IMR-90 (cell line): ENCODE measurements at regions of chr7 and their contacts with region 1.

Region 1: GRCh38 chr7:143490717-143491306 is 13.1 kb downstream of the TAS2R41 start:
- DNase-seq: no peak
- ATAC-seq: peak; percentile 48
- H3K4me3 ChIP-seq: no peak overlapping the region
- H3K27ac ChIP-seq: no peak overlapping the region
- H3K4me1 ChIP-seq: peaks cover 7% of the 10 kb centered on the region
- H3K27me3 ChIP-seq: no peaks in the 10 kb centered on the region
- CTCF ChIP-seq: peak; percentile 45
- POLR2A ChIP-seq: no peak
- RAD21 ChIP-seq: peak; percentile 35; the same call in 1 of the 2 replicates

Region 2: GRCh38 chr7:143321734-143322133 is 169.1 kb before region 1 on chr7:
- CTCF ChIA-PET with region 1: no interaction called
- POLR2A ChIA-PET with region 1: no interaction called
- dilution Hi-C with region 1: no loop called
- in situ Hi-C with region 1: no loop called
- intact Hi-C with region 1: no loop called
- DNase-seq: no peak
- ATAC-seq: no peak
- H3K4me3 ChIP-seq: no peak overlapping the region
- H3K27ac ChIP-seq: no peak overlapping the region
- H3K4me1 ChIP-seq: peaks cover 10% of the 10 kb centered on the region; the same call in 1 of the 2 replicates
- H3K27me3 ChIP-seq: peaks cover 5% of the 10 kb centered on the region
- CTCF ChIP-seq: no peak
- POLR2A ChIP-seq: no peak
- RAD21 ChIP-seq: no peak

Region 3: GRCh38 chr7:143391462-143392404 is 99.1 kb before region 1 on chr7:
- CTCF ChIA-PET with region 1: no interaction called
- POLR2A ChIA-PET with region 1: no interaction called
- dilution Hi-C with region 1: no loop called
- in situ Hi-C with region 1: no loop called
- intact Hi-C with region 1: loop called (anchors 5 kb)
- DNase-seq: peak; percentile 85
- ATAC-seq: peak; percentile 16
- H3K4me3 ChIP-seq: no peak overlapping the region
- H3K27ac ChIP-seq: peak overlapping the region; percentile 45
- H3K4me1 ChIP-seq: peaks cover 42% of the 10 kb centered on the region
- H3K27me3 ChIP-seq: no peaks in the 10 kb centered on the region
- CTCF ChIP-seq: no peak
- POLR2A ChIP-seq: no peak
- RAD21 ChIP-seq: no peak

Region 4: GRCh38 chr7:143410521-143411004 is 80.2 kb before region 1 on chr7:
- CTCF ChIA-PET with region 1: no interaction called
- POLR2A ChIA-PET with region 1: no interaction called
- dilution Hi-C with region 1: no loop called
- in situ Hi-C with region 1: no loop called
- intact Hi-C with region 1: loop called (anchors 5 kb)
- DNase-seq: peak; percentile 72
- ATAC-seq: peak; percentile 76
- H3K4me3 ChIP-seq: no peak overlapping the region
- H3K27ac ChIP-seq: no peak overlapping the region
- H3K4me1 ChIP-seq: peaks cover 12% of the 10 kb centered on the region; the same call in 1 of the 2 replicates
- H3K27me3 ChIP-seq: no peaks in the 10 kb centered on the region; the same call in 1 of the 2 replicates
- CTCF ChIP-seq: no peak
- POLR2A ChIP-seq: no peak
- RAD21 ChIP-seq: no peak